Activated CD4-positive, alpha-beta T cell treated with anti-CD3 and anti-CD28 coated beads, Interleukin-2, amount 10 ng/mL, durations not matched to agents 24 days and 14 days (primary cell): ENCODE measurements at regions of chr6 and their contacts with region 1.

Region 1: GRCh38 chr6:41602864-41603608 is 35.2 kb upstream of the MDFI start:
- DNase-seq: peak; percentile 93
- H3K4me3 Mint-ChIP-seq: peak overlapping the region; percentile 21
- H3K27ac Mint-ChIP-seq: no peak overlapping the region
- H3K4me1 Mint-ChIP-seq: peaks cover 4% of the 10 kb centered on the region
- H3K27me3 Mint-ChIP-seq: peaks cover 4% of the 10 kb centered on the region

Region 2: DNA sequence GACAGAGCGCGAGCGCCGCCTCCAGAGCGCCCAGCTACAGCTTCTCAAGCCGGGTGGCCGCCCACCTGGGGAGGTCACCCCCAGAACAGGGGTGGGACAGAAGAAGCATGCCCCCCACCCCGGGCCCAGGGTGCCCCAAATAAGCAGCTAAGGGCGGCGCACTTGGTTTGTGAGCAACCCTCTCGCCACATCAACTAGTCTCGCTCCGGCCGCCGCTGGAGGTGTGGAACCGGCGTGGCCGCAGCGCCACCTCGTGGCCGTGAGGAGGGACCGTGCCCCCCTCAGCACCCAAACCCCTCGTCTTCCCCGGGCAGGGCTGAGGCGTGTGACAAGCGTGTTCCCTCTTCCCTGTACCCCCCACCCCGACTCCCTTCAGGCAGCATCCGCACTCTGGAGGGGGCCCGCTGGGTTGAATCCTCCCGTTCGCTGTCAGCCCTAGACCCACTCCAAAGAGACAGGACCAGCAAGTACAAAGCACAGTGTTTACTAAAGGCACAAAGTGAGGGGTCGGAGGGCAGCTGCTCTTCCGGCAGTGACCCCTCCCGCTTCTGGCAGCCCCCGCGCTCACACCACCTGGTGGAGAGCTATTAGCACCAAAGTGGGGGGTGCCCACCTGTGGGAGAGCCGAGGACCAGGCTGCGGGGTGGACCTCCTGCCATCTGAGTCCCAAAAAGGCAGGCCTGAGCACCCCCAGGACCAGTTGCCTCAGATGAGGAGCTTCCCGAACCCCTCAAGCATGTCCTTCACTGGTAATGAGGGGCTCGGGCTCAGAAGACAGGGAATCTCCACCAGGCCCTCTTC is 80.7 kb after region 1 on chr6:
- intact Hi-C with region 1: loop called (anchors 1 kb)
- DNase-seq: peak; percentile 94
- H3K4me3 Mint-ChIP-seq: peak overlapping the region; percentile 83
- H3K27ac Mint-ChIP-seq: peak overlapping the region; percentile 82
- H3K4me1 Mint-ChIP-seq: peaks cover 6% of the 10 kb centered on the region
- H3K27me3 Mint-ChIP-seq: peaks cover 3% of the 10 kb centered on the region

Region 3: GRCh38 chr6:41779793-41780545 is 176.9 kb after region 1 on chr6 and contains the start of gene FRS3:
- intact Hi-C with region 1: loop called (anchors 1 kb)
- DNase-seq: peak; percentile 100
- H3K4me3 Mint-ChIP-seq: peak within 1 kb of the TSS; percentile 96
- H3K27ac Mint-ChIP-seq: peak within 1 kb of the TSS; percentile 81
- H3K4me1 Mint-ChIP-seq: peaks cover 22% of the 10 kb centered on the region
- H3K27me3 Mint-ChIP-seq: peaks cover 19% of the 10 kb centered on the region
- total RNA-seq, gene FRS3: 4.7 and 6.8 TPM in 2 replicates